Endothelial cell of umbilical vein (primary cell): ENCODE measurements at regions of chr7 and their contacts with region 1.

Region 1: DNA sequence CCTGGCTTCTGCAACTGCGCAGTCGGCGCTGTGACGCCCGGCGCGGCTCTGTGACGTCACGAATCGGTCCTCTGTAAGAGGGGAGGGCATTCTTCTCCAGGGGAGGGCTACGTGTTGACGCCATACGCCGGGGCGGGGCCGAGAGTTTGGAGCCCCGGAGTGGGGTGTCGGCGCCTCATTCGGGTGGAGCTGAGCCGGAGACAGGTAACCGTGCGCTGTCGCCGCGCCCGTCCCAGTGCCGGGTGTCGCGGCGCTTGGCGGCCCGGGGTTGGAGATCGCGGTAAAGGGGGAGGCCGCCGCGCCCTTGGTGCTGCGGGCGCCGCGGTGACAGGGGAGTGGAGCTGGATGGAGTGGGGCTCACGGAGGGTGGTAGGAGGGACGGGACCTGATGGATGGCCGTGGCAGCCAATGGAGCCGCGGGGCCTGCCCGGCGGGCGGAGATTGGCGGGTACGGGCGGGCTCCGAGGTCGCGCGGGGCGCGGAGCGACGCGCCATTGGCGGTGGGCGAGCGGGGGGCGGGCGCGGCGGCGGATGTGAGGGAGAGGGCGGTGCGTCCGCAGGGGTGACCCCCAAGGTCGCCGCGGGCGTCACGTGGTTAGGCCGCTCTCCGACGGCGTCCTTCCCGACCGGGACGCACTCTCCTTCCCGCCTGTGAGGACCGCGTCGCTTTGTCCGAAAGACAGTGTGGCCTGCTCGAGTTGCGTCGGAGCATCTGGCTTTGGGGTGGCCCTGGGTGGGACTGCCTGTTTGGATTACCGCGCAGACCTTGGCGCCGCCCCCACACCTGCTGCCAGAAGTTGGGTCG is at the start of gene OGDH:
- DNase-seq: peak; percentile 99
- H3K4me3 ChIP-seq: peak within 1 kb of the TSS; percentile 57 to 98 (median 81)
- H3K27ac ChIP-seq: peak within 1 kb of the TSS; percentile 80
- H3K4me1 ChIP-seq: peaks cover 11% of the 10 kb centered on the region
- H3K27me3 ChIP-seq: peaks cover 0 to 2% of the 10 kb centered on the region in 2 experiments
- CTCF ChIP-seq: no peak
- POLR2A ChIP-seq: peak; percentile 86
- total RNA-seq, gene OGDH: 81.4 and 88.9 TPM in 2 replicates

Region 2: GRCh38 chr7:44633254-44634186 is 26.9 kb after region 1 on chr7:
- CTCF ChIA-PET with region 1: interaction called, 11 read pairs
- POLR2A ChIA-PET with region 1: interaction called, 6 read pairs
- dilution Hi-C with region 1: no loop called
- intact Hi-C with region 1: loop called (anchors 1 kb)
- DNase-seq: peak; percentile 95
- H3K4me3 ChIP-seq: no peak overlapping the region
- H3K27ac ChIP-seq: peak overlapping the region; percentile 97
- H3K4me1 ChIP-seq: peaks cover 38% of the 10 kb centered on the region
- H3K27me3 ChIP-seq: no peaks in the 10 kb centered on the region
- CTCF ChIP-seq: no peak
- POLR2A ChIP-seq: no peak

Region 3: DNA sequence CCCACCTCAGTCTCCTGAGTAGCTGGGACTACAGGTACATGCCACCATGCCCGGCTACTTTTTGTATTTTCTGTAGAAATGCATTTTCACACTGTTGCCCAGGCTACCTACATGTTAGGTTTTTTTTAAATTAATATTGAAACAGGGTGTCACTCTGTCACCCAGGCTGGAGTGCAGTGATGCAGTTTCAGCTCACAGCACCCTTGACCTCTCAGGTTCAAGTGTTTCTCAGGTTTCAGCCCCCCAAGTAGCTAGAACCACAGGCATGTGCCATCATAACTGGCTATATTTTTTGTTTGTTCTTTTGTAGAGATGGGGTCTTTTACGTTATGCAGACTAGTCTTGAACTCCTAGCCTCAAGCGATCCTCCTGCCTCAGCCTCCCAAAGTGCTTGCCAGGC is 109.6 kb after region 1 on chr7:
- CTCF ChIA-PET with region 1: no interaction called
- POLR2A ChIA-PET with region 1: no interaction called
- dilution Hi-C with region 1: no loop called
- intact Hi-C with region 1: no loop called
- DNase-seq: no peak
- H3K4me3 ChIP-seq: no peak overlapping the region
- H3K27ac ChIP-seq: no peak overlapping the region
- H3K4me1 ChIP-seq: no peaks in the 10 kb centered on the region
- H3K27me3 ChIP-seq: no peaks in the 10 kb centered on the region
- CTCF ChIP-seq: no peak
- POLR2A ChIP-seq: no peak

Region 4: GRCh38 chr7:44727158-44727933 is 120.7 kb after region 1 on chr7:
- CTCF ChIA-PET with region 1: no interaction called
- POLR2A ChIA-PET with region 1: no interaction called
- dilution Hi-C with region 1: no loop called
- intact Hi-C with region 1: loop called (anchors 1 kb)
- DNase-seq: peak; percentile 80
- H3K4me3 ChIP-seq: no peak overlapping the region
- H3K27ac ChIP-seq: peak overlapping the region; percentile 67
- H3K4me1 ChIP-seq: peaks cover 16% of the 10 kb centered on the region
- H3K27me3 ChIP-seq: no peaks in the 10 kb centered on the region
- CTCF ChIP-seq: no peak
- POLR2A ChIP-seq: peak; percentile 48

Region 5: DNA sequence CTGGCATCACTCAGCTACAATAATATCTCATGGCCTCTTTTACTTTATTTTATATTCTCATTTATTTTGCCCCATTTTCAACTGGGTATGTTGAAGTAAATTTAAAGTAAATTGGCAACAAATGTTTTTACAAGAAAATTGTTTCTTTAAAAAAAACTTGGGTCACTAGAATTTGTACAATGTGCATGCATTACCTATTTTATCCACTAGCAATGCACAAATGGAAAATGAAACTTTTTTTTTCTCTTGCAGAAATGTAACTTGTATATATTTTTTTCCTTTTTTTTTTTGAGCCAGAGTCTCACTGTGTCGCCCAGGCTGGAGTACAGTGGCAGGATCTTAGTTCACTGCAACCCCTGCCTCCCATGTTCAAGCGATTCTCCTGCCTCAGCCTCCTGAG is 251.5 kb after region 1 on chr7:
- CTCF ChIA-PET with region 1: no interaction called
- POLR2A ChIA-PET with region 1: no interaction called
- dilution Hi-C with region 1: no loop called
- intact Hi-C with region 1: no loop called
- DNase-seq: no peak
- H3K4me3 ChIP-seq: no peak overlapping the region
- H3K27ac ChIP-seq: no peak overlapping the region
- H3K4me1 ChIP-seq: no peaks in the 10 kb centered on the region
- H3K27me3 ChIP-seq: no peaks in the 10 kb centered on the region
- CTCF ChIP-seq: no peak
- POLR2A ChIP-seq: no peak

Region 6: GRCh38 chr7:44885394-44886317 is 279.0 kb after region 1 on chr7 and contains the start of gene PURB:
- CTCF ChIA-PET with region 1: no interaction called
- POLR2A ChIA-PET with region 1: no interaction called
- dilution Hi-C with region 1: no loop called
- intact Hi-C with region 1: loop called (anchors 1 kb)
- DNase-seq: peak; percentile 97
- H3K4me3 ChIP-seq: peak within 1 kb of the TSS; percentile 30 to 85 (median 78)
- H3K27ac ChIP-seq: peak within 1 kb of the TSS; percentile 91
- H3K4me1 ChIP-seq: peaks cover 42% of the 10 kb centered on the region
- H3K27me3 ChIP-seq: no peaks in the 10 kb centered on the region
- CTCF ChIP-seq: no peak
- POLR2A ChIP-seq: no peak
- total RNA-seq, gene PURB: 25.0 and 25.5 TPM in 2 replicates

Region 7: GRCh38 chr7:44978511-44979366 is 372.1 kb after region 1 on chr7 and contains the start of gene MYO1G:
- CTCF ChIA-PET with region 1: no interaction called
- POLR2A ChIA-PET with region 1: no interaction called
- dilution Hi-C with region 1: no loop called
- intact Hi-C with region 1: no loop called
- DNase-seq: no peak
- H3K4me3 ChIP-seq: no peak within 1 kb of the TSS
- H3K27ac ChIP-seq: no peak within 1 kb of the TSS
- H3K4me1 ChIP-seq: peaks cover 1% of the 10 kb centered on the region
- H3K27me3 ChIP-seq: no peaks in the 10 kb centered on the region
- CTCF ChIP-seq: no peak
- POLR2A ChIP-seq: no peak
- total RNA-seq, gene MYO1G: 0.11 and 0.12 TPM in 2 replicates

Region 8: GRCh38 chr7:45080265-45080962 is 473.8 kb after region 1 on chr7:
- CTCF ChIA-PET with region 1: no interaction called
- POLR2A ChIA-PET with region 1: no interaction called
- dilution Hi-C with region 1: no loop called
- intact Hi-C with region 1: no loop called
- DNase-seq: no peak
- H3K4me3 ChIP-seq: no peak overlapping the region
- H3K27ac ChIP-seq: no peak overlapping the region
- H3K4me1 ChIP-seq: no peaks in the 10 kb centered on the region
- H3K27me3 ChIP-seq: no peaks in the 10 kb centered on the region
- CTCF ChIP-seq: no peak
- POLR2A ChIP-seq: no peak